Heart left ventricle (tissue), 16 donors: ENCODE measurements at regions of chr3 and their contacts with region 1.

Region 1: GRCh38 chr3:187738331-187739093 is 6.8 kb downstream of the BCL6 start:
- DNase-seq: peak; percentile 75 to 95 (median 93)
- ATAC-seq: peak; percentile 65 to 78 (median 72)
- H3K4me3 ChIP-seq: peak overlapping the region; percentile 15 to 89 (median 72)
- H3K27ac ChIP-seq: peak overlapping the region; percentile 94 to 100 (median 98)
- H3K4me1 ChIP-seq: peaks cover 0 to 58% (median 36%) of the 10 kb centered on the region in 12 donors
- H3K27me3 ChIP-seq: no peaks in the 10 kb centered on the region
- CTCF ChIP-seq: peak; percentile 50 to 88 (median 74)
- POLR2A ChIP-seq: peak in 1 of 2 donors; percentile 45

Region 2: DNA sequence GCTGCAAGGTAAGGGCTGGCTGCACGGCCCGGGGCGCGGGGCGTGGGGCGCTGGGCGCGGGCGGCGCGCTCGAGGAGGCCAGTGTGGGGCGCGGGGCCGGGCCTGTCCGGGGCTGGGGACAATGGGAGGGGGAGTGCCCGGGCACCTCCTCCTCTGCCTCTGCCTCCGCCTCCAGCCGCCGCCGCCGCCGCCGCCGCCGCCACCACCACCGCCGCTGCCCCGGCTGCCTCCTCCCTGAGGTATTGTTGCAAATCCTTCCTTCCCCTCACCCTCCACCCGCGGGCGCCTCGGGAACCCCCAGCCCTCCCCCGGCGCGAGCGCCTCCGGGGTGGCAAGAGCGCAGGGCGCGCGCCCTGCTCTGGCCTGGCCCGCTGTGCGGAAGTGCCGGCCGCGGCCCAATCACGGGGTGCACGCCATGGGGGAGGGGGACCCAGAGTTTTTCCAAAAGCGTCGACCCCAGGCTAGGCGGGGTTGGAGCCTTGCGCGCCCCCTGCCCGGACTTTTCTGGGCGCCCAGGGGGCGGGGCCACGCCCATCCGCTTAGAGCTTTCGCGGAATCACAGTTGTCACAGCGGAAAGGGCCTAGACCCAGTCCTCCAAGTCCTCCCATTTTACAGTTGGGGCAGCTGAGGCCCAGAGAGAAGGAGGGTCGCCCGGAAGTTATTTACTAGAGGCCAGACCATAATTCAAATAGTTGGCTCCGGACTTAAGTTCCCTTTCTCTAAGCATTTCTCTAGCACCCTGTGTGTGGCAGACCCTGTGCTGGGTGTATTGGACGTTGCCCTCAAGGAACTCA is 415.7 kb after region 1 on chr3 and contains the start of gene LPP:
- intact Hi-C with region 1: loop called in 4 of 10 experiments (anchors 5 to 10 kb)
- DNase-seq: peak; percentile 83 to 92 (median 86)
- ATAC-seq: peak; percentile 67 to 93 (median 82)
- H3K4me3 ChIP-seq: peak within 1 kb of the TSS; percentile 68 to 94 (median 86)
- H3K27ac ChIP-seq: peak within 1 kb of the TSS; percentile 90 to 99 (median 97)
- H3K4me1 ChIP-seq: peaks cover 0 to 62% (median 41%) of the 10 kb centered on the region in 12 donors
- H3K27me3 ChIP-seq: no peaks in the 10 kb centered on the region
- CTCF ChIP-seq: peak in 2 of 12 donors; percentile 7 to 25
- POLR2A ChIP-seq: no peak
- total RNA-seq, gene LPP: 76.6 to 178 (median 111) TPM

Region 3: DNA sequence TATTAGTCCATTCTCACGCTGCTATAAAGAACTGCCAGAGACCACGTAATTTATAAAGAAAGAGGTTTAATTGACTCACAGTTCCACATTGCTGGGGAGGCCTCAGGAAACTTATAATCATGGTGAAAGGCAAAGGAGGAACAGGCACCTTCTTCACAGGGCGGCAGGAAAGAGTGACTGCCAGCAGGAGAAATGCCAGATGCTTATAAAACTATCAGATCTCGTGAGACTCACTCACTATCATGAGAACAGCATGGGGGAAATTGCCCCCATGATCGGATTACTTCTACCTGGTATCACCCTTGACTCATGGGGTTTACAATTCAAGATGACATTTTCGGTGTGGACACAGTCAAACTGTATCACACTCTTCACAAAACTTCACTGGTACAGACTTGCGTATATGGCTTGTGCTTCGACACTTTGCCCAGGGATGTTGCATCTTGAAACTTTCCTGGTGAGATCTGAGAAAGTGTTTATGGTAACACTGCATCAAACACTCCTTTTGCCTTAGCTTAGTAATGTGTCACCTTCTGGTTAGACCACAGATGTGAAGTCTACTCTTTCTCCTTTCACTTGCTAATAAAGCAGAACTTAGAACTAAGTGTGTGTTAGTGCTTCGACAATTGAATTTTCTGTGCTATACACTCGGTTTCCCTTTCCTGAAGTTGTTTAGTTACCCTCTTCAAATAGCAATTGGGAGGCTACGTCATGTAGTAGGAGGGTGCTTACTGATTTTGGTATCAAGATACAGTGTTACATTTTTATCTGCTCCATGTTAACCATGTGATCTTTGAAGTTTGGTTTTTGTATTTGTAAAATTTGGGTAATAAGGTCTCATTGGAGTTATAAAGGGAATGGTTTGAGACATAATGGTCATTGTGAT is 601.1 kb after region 1 on chr3:
- intact Hi-C with region 1: loop called in 4 of 10 experiments (anchors 5 to 10 kb)
- DNase-seq: no peak
- ATAC-seq: no peak
- H3K4me3 ChIP-seq: no peak overlapping the region
- H3K27ac ChIP-seq: peak overlapping the region in 9 of 12 donors; percentile 2 to 55 (median 18)
- H3K4me1 ChIP-seq: peaks cover 0 to 45% (median 20%) of the 10 kb centered on the region in 12 donors
- H3K27me3 ChIP-seq: no peaks in the 10 kb centered on the region
- CTCF ChIP-seq: no peak
- POLR2A ChIP-seq: no peak

Region 4: GRCh38 chr3:188584162-188584529 is 845.6 kb after region 1 on chr3:
- intact Hi-C with region 1: loop called in 2 of 10 experiments (anchors 5 to 10 kb)
- DNase-seq: no peak
- ATAC-seq: peak in 2 of 4 donors; percentile 66 to 71
- H3K4me3 ChIP-seq: no peak overlapping the region
- H3K27ac ChIP-seq: peak overlapping the region in 3 of 12 donors; percentile 14 to 60 (median 52)
- H3K4me1 ChIP-seq: peaks cover 0 to 66% (median 14%) of the 10 kb centered on the region in 12 donors
- H3K27me3 ChIP-seq: no peaks in the 10 kb centered on the region
- CTCF ChIP-seq: no peak
- POLR2A ChIP-seq: no peak

Region 5: DNA sequence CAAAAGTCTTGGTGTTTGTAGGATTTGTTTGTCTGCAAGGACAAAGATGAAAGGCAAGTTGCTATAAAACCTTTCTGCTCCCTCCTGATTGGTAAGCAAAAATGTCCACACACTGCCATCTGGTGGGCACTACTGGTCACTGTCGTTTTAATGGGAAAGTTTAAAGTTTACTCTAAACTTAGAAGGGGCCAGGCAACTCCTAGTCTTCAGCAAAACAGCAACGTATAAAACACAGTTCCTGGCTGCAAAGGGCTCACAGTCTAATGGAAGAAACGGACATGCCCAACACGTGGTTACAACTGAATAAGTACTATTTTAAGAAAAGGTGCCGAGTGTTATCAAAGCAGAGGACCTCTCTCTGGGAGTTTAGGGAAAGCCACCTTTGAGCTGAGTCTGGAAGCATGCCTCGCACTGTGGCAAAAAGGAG is 1409.6 kb after region 1 on chr3:
- intact Hi-C with region 1: loop called (anchors 1 to 5 kb)
- DNase-seq: peak in 4 of 5 donors; percentile 54 to 67 (median 60)
- ATAC-seq: peak in 3 of 4 donors; percentile 75 to 78 (median 75)
- H3K4me3 ChIP-seq: no peak overlapping the region
- H3K27ac ChIP-seq: peak overlapping the region in 4 of 12 donors; percentile 7 to 51 (median 27)
- H3K4me1 ChIP-seq: peaks cover 0 to 24% (median 5%) of the 10 kb centered on the region in 12 donors
- H3K27me3 ChIP-seq: no peaks in the 10 kb centered on the region
- CTCF ChIP-seq: peak; percentile 69 to 86 (median 78)
- POLR2A ChIP-seq: no peak